Calu3 (cell line): ENCODE measurements at regions of chr1 and their contacts with region 1.

Region 1: DNA sequence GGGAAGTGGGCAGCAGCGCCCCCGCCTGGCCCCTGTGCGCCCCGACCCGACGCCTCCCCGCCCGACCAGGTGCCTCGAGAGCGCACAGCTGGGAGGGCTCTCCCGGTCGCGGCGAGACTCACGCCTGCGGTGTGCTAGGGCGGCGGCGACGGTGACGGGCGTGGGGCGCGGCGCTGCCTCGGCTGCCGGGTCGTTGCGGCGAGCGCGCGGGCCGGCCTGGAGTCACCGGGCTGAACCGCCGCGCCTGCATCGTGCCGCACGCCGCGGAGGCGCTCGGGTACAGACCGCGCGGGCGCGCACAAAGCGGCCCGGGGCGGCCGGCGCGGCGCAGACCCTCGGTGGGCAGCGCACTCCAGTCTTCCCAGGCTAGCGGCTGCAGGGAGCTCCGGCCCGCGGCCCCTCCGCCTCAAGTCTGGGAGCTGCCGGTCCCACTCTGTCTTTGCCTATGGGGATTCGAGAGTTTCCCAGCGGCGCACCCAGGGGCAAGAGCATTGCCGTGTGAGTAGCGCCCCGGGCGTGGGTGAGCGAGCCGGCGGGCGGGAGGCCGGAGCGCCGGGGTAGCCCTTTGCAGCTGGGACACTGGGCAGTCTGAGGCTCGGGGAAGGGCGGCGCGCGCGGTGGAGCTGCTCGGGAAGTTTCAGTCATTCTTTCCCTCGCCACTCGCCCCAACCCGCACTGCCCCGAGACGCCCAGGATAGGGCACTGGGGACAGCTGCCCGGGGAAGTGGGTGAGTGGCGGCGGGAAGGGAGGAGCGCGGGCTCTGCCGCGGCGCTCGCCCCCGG is at the start of gene SLC35F3:
- DNase-seq: peak; percentile 87
- H3K4me3 Mint-ChIP-seq: peak within 1 kb of the TSS; percentile 80
- H3K27ac Mint-ChIP-seq: peak within 1 kb of the TSS; percentile 45
- H3K4me1 Mint-ChIP-seq: peaks cover 17% of the 10 kb centered on the region
- H3K27me3 Mint-ChIP-seq: peaks cover 50% of the 10 kb centered on the region
- CTCF ChIP-seq: peak; percentile 71
- total RNA-seq, gene SLC35F3: 0.54 and 0.66 TPM in 2 replicates

Region 2: GRCh38 chr1:233304489-233305102 is 600.2 kb before region 1 on chr1:
- CTCF ChIA-PET with region 1: no interaction called
- intact Hi-C with region 1: loop called (anchors 10 kb)
- DNase-seq: no peak
- H3K4me3 Mint-ChIP-seq: no peak overlapping the region
- H3K27ac Mint-ChIP-seq: no peak overlapping the region
- H3K4me1 Mint-ChIP-seq: peaks cover 8% of the 10 kb centered on the region
- H3K27me3 Mint-ChIP-seq: no peaks in the 10 kb centered on the region
- CTCF ChIP-seq: peak; percentile 67

Region 3: GRCh38 chr1:233440951-233441401 is 463.8 kb before region 1 on chr1:
- CTCF ChIA-PET with region 1: interaction called, 3 read pairs
- intact Hi-C with region 1: loop called (anchors 1 kb)
- DNase-seq: peak; percentile 40
- H3K4me3 Mint-ChIP-seq: no peak overlapping the region
- H3K27ac Mint-ChIP-seq: no peak overlapping the region
- H3K4me1 Mint-ChIP-seq: no peaks in the 10 kb centered on the region
- H3K27me3 Mint-ChIP-seq: no peaks in the 10 kb centered on the region
- CTCF ChIP-seq: peak; percentile 67

Region 4: DNA sequence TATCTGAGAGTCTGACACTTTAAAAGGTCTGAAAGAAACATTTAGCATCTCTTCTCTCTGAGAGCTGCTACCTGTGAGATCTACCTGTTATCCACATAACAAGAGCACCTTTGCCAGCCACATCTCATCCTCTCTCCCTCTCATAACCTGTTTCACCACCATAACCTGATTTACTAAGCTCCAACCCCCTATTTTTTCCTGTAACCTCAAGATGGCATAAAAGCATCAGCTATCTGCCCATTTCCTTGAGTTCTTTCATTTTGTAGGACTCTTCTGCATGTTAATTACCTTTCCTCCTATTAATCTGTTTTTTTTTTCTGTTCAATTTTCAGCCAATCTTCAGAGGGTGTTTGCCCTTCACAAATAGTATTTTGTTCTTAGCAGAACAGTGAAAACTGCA is 427.5 kb before region 1 on chr1:
- CTCF ChIA-PET with region 1: interaction called, 13 read pairs
- intact Hi-C with region 1: no loop called
- DNase-seq: no peak
- H3K4me3 Mint-ChIP-seq: no peak overlapping the region
- H3K27ac Mint-ChIP-seq: no peak overlapping the region
- H3K4me1 Mint-ChIP-seq: peaks cover 19% of the 10 kb centered on the region
- H3K27me3 Mint-ChIP-seq: no peaks in the 10 kb centered on the region
- CTCF ChIP-seq: no peak

Region 5: GRCh38 chr1:233982827-233983518 is 78.1 kb after region 1 on chr1:
- CTCF ChIA-PET with region 1: no interaction called
- intact Hi-C with region 1: loop called (anchors 2 kb)
- DNase-seq: peak; percentile 64
- H3K4me3 Mint-ChIP-seq: no peak overlapping the region
- H3K27ac Mint-ChIP-seq: no peak overlapping the region
- H3K4me1 Mint-ChIP-seq: no peaks in the 10 kb centered on the region
- H3K27me3 Mint-ChIP-seq: peaks cover 25% of the 10 kb centered on the region
- CTCF ChIP-seq: no peak

Region 6: GRCh38 chr1:234065794-234066447 is 161.1 kb after region 1 on chr1:
- CTCF ChIA-PET with region 1: interaction called, 6 read pairs
- intact Hi-C with region 1: loop called (anchors 5 kb)
- DNase-seq: peak; percentile 88
- H3K4me3 Mint-ChIP-seq: no peak overlapping the region
- H3K27ac Mint-ChIP-seq: no peak overlapping the region
- H3K4me1 Mint-ChIP-seq: no peaks in the 10 kb centered on the region
- H3K27me3 Mint-ChIP-seq: no peaks in the 10 kb centered on the region
- CTCF ChIP-seq: peak; percentile 91

Region 7: GRCh38 chr1:235075188-235075926 is 1170.5 kb after region 1 on chr1:
- CTCF ChIA-PET with region 1: interaction called, 10 read pairs
- intact Hi-C with region 1: no loop called
- DNase-seq: peak; percentile 73
- H3K4me3 Mint-ChIP-seq: peak overlapping the region; percentile 50
- H3K27ac Mint-ChIP-seq: peak overlapping the region; percentile 98
- H3K4me1 Mint-ChIP-seq: peaks cover 35% of the 10 kb centered on the region
- H3K27me3 Mint-ChIP-seq: no peaks in the 10 kb centered on the region
- CTCF ChIP-seq: no peak